ENCODE measurements at regions of chr16 and their contacts with region 1.

Region 1: DNA sequence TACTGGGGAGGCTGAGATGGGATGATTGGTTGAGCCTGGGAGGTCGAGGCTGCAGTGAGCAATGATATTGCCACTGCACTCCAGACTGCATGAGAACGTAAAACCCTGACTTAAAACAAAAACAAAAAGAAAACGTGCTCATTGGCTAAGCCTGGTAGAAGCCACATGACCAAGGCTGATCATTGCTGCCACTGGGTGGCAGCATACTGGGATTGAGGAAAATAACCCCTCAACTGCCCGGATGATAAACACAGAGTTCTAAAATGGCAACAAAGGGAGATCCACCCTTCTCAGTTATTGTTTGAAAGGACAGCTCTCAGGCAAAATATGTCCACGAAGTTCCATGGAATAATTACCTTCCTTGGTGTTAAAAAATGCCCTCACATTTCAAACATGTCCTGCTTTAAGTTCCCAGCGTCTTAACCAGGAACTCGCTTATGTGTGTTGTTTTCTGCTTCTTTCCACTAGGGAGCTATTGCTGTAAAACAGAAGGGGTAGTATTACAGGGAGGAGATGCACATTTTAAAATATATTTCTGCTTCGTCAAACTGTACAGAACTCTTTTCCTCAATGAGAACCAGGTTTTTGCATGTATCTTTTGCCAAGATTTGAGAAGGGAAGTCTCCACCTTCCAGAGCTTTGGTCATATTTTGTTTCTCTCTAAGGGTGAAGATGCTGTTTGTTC is 675.3 kb downstream of the MAF start:
- DNase-seq: peak; percentile 48
- H3K4me3 ChIP-seq: no peak overlapping the region
- H3K27ac ChIP-seq: no peak overlapping the region
- H3K4me1 ChIP-seq: no peaks in the 10 kb centered on the region
- CTCF ChIP-seq: peak; percentile 81

Region 2: DNA sequence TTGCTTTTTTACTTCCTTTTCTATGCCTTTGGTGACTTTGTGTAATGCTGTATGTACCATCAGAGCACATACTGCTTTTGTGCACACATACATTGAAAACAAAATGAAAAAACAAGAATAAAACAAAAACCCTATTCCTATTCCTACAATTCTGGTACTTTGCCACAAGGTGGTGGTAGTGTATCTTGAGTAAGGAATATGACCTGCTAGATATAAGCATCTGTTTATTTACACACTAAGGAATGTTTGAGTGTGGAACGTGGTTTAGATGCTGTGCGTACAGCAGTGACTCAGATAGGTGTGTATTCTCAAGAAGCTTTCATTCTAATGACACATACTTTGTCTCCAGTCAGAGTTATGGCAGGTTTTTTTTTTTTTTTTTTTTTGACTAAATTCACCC is 219.5 kb before region 1 on chr16:
- CTCF ChIA-PET with region 1: no interaction called
- POLR2A ChIA-PET with region 1: no interaction called
- intact Hi-C with region 1: loop called (anchors 10 kb)
- DNase-seq: peak; percentile 22
- H3K4me3 ChIP-seq: no peak overlapping the region
- H3K27ac ChIP-seq: no peak overlapping the region
- H3K4me1 ChIP-seq: no peaks in the 10 kb centered on the region
- CTCF ChIP-seq: peak; percentile 74

Region 3: DNA sequence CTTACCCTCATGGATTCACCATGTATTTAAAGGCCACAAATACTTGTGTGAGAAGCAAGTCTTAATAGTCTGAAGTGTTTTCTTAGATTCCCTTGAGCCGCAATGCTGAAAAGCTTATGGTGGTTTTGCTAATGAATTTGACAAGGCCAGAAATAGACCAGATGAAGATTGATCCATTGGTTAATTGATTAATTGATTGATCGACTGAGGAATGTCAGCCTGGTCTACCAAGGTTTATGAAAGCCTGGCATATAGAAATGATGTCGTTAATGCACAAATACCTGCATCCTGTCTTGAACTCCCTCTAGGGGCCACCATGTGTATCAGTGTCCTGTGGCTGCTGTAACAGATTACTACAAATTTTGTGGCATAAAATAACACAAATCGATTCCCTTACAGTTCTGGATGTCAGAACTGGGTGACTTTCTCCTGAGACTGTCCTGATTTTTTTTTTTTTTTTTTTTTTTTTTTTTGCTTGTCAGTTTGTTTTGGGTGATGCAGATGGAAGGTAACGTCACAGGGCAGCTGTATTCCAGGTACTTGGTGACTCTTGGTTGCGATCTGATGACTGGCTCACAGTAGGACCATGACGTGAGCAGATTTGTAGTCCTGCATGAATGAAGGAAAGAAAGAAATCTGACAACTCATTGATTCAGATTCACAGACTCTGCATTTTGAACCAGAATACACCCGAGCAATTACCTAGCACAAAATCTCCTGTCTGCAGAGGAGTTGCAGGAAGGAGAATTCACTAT is 122.2 kb after region 1 on chr16:
- CTCF ChIA-PET with region 1: no interaction called
- POLR2A ChIA-PET with region 1: no interaction called
- intact Hi-C with region 1: loop called (anchors 10 kb)
- DNase-seq: peak; percentile 27
- H3K4me3 ChIP-seq: no peak overlapping the region
- H3K27ac ChIP-seq: no peak overlapping the region
- H3K4me1 ChIP-seq: no peaks in the 10 kb centered on the region
- CTCF ChIP-seq: peak; percentile 75

Region 4: DNA sequence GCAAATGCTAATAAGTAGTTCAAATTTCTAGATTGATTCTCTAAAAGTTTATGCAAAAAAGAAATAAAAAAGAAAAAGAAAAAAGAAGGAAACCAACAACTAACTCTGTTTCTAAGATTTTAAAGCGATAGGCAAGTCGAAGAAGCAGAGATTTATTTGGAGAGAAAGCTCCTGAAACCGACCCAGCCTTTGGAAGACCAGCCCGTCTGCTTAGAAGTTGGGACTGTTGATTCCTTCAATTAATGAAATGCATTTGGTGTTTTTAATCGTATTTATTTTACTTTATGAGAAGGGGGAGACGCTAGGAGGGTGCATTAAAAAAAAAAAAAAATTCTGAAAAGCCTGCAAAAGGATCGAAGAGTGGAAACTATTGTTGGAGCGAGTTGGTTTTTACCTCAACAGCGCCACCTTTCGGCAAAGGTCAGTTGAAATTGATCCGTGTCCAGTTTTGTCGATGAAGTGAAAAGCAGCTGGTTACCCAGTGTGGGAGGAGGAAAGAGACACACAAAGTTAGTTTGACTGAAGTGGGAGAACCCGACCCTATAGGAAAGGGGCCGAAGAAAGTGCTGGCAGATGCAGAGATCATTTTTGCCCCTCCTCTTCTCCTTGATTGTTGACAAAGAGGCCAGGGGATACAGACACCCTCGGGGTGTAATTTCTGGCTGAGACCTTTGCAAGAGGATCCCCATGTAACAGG is 676.9 kb after region 1 on chr16:
- CTCF ChIA-PET with region 1: no interaction called
- POLR2A ChIA-PET with region 1: no interaction called
- intact Hi-C with region 1: loop called (anchors 2 kb)
- DNase-seq: peak; percentile 60
- H3K4me3 ChIP-seq: no peak overlapping the region
- H3K27ac ChIP-seq: no peak overlapping the region
- H3K4me1 ChIP-seq: peaks cover 7% of the 10 kb centered on the region
- CTCF ChIP-seq: peak; percentile 98